ENCODE measurements at regions of chr3 and their contacts with region 1.

Region 1: GRCh38 chr3:58414538-58415197 is 19.0 kb downstream of the PDHB start:
- DNase-seq: no peak
- H3K4me3 ChIP-seq: no peak overlapping the region
- CTCF ChIP-seq: peak; percentile 65

Region 2: DNA sequence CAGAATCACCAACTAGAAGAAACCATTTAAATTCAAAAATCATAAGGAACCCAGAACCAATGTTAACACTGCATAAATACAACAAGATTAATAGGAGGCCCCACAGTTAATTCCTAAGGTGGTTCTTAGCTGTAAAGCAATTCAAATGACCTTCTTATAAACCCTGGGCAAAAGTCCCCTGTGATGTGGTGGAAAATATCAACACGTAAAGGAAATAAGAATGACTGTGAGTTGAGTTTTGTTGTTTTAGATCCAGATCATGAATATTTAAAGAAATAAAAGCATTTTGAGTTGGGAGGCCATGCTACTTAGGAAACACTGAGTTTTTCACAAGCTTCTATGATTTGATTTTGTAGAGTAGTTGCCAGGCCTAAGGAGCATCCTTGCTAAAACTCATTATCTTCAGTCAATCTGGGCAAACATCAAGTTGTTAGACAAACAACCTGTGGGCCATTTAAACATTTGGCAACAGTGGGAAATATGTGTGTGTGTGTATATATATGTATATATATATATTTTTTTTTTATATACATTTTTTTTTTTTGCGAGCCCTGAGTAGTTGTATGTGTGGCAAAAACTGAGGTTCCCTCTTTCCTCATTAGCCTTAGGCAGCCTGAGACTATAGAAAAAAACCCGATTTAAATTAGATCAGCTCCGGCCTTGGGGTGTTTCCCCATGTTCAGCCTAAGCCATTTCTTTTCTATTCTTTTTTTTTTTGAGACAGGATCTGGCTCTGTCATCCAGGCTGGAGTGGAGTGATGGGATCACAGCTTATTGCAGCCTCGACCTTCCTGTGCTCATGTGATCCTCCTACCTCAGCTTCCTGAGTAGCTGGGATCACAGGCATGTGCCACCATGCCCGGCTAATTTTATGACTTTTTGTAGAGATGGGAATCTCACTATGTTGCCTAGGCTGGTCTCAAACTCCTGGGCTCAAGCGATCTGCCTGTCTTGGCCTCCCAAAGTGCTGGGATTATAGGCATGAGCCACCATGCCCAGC is 90.0 kb before region 1 on chr3:
- CTCF ChIA-PET with region 1: interaction called, 155 read pairs
- POLR2A ChIA-PET with region 1: interaction called, 3 read pairs
- DNase-seq: no peak
- H3K4me3 ChIP-seq: no peak overlapping the region
- CTCF ChIP-seq: no peak

Region 3: DNA sequence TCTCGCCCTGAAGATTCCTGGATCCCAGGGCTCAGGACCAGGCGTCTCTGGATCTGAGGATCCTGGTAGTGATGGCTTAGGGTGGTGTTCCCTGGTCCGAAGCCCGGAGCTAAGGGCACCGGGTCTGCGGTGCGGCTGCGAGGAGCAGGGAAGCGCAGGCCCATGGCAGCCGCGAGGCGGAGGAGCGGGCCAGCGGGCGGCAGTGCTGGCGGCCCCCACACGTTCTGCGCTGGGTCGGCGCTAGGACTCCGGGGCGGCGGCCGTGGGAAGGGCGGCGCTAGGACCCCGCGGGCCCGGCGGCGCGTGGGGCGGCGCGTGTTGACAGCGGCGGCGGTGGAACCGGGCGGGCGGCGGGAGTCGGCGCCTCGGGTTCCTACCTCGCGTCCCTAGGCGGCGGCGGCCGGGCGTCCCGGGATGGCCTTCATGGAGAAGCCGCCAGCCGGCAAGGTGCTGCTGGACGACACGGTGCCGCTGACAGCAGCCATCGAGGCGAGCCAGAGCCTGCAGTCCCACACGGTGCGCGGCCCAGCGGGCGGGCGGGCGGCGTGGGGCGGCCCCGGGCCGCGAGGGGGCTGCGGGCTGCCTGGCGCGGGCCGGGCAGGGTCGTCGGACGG is 82.0 kb before region 1 on chr3 and contains the start of gene PXK:
- CTCF ChIA-PET with region 1: interaction called, 155 read pairs
- POLR2A ChIA-PET with region 1: interaction called, 3 read pairs
- DNase-seq: no peak
- H3K4me3 ChIP-seq: peak within 1 kb of the TSS; percentile 75
- CTCF ChIP-seq: peak; percentile 48

Region 4: DNA sequence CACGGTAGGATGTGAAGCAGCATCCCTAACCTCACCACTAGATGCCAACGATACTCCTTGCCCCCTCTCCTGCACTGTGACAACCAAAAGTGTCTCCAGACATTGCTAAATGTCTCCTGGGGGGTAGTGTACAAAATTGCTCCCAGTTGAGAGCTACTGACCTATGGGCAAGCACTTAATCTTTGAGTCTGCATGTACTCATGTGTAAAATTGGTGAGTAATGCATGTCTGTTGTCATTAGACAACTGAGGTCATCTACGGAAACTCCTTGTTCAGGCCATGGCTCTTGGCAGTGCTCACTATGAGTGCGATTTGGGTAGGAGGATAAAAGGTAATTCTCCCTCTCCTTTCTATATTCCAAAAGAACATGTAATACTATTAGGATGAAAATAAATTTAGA is 10.3 kb before region 1 on chr3:
- CTCF ChIA-PET with region 1: interaction called, 26 read pairs
- POLR2A ChIA-PET with region 1: no interaction called
- DNase-seq: no peak
- H3K4me3 ChIP-seq: no peak overlapping the region
- CTCF ChIP-seq: no peak

Region 5: DNA sequence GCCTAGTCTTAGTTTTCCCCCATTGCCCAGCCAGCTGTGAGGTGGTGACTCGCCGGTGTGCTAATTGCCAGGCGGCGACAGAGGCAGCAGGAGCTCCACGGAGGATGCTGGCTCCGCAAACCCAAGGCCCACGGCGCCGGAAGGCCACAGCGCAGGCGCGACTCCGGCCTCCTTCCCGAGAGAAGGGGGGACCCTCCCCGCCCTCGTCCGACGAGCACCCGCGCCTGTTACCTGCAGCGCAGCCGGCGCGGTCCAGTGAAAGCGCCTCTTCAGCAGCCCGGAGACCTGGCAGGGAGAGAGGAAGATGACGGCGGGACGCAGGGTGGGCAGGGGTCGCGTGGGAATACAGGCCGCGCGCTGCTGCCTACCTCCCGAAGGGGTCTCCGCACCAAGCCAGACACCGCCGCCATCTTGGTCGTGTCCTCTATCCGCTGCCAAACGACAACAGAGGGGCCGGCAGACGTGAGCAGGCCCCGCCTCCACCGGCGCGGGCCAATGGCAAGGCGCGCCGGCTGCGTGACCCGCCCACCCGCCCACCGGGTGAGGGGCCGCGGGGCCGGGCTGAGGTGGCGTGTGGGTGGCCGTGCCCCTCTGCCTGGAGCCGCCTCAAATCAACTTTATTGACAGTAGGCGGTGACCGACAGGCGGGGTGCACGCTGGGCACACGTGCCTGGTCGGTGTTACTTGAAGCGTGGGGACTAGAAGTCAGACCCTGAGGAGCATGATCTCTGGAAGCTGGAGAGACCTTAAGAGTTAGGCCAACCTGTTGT is 18.9 kb after region 1 on chr3 and contains the start of gene PDHB:
- CTCF ChIA-PET with region 1: interaction called, 53 read pairs
- POLR2A ChIA-PET with region 1: interaction called, 3 read pairs
- DNase-seq: no peak
- H3K4me3 ChIP-seq: peak within 1 kb of the TSS; percentile 94
- CTCF ChIP-seq: no peak

Measured in AG04449 (cell line).